Activated CD4-positive, alpha-beta T cell treated with anti-CD3 and anti-CD28 coated beads for 36 hours (primary cell): ENCODE measurements at regions of chr6 and their contacts with region 1.

Region 1: DNA sequence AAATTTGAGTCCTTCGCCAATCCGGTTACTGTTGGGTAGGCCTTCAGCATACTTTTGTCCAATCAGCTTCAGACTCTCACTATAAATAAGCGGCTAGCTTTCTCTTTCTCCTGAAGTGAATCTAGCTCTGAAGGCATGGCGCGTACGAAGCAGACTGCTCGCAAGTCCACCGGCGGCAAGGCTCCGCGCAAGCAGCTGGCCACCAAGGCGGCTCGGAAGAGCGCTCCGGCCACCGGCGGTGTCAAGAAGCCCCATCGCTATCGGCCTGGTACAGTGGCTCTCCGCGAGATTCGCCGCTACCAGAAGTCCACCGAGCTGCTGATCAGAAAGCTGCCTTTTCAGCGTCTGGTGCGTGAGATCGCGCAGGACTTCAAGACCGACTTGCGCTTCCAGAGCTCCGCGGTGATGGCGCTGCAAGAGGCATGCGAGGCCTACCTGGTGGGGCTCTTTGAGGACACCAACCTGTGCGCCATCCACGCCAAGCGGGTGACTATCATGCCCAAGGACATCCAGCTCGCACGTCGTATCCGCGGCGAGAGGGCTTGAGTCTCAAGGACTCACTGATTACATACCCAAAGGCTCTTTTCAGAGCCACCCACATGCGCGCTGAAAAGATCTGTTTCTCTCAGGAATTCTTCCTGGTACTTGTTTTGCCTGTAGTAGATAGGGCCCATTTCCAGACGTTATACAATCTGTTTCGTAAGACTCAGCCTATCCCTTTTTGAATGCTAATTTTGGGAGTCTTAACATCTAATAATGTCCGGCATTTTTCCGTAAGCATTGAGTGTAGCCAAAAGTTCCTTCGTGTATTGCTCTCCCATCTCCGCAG is 102.0 kb downstream of the OR2B2 start:
- DNase-seq: peak; percentile 83
- ATAC-seq: peak; percentile 33
- H3K4me3 Mint-ChIP-seq: peak overlapping the region; percentile 86
- H3K27ac Mint-ChIP-seq: peak overlapping the region; percentile 95
- H3K4me1 Mint-ChIP-seq: peaks cover 49% of the 10 kb centered on the region
- H3K27me3 Mint-ChIP-seq: no peaks in the 10 kb centered on the region

Region 2: DNA sequence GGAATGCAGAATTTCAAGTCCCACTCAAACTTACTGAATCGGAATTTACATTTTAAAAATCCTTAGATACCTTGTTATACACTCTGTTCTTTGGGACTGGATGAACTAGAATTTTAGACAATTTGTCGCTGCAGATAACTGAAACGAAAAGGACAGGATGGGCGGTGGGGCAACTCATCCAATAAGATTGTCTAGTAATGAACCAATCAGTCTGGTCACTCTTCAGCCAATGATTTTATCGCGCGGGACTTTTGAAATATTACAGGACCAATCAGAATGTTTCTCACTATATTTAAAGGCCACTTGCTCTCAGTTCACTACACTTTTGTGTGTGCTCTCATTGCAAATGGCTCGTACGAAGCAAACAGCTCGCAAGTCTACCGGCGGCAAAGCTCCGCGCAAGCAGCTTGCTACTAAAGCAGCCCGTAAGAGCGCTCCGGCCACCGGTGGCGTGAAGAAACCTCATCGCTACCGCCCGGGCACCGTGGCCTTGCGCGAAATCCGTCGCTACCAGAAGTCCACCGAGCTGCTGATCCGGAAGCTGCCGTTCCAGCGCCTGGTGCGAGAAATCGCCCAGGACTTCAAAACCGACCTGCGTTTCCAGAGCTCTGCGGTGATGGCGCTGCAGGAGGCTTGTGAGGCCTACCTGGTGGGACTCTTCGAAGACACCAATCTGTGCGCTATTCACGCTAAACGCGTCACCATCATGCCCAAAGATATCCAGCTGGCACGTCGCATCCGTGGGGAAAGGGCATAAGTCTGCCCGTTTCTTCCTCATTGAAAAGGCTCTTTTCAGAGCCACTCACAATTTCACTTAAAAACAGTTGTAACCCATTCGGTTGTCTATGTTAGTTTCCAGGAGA is 1764.9 kb before region 1 on chr6:
- CTCF ChIA-PET with region 1: no interaction called
- POLR2A ChIA-PET with region 1: interaction called, 4 read pairs
- intact Hi-C with region 1: loop called in 1 of 2 experiments (anchors 5 kb)
- DNase-seq: peak; percentile 83
- ATAC-seq: peak; percentile 63
- H3K4me3 Mint-ChIP-seq: peak overlapping the region; percentile 79
- H3K27ac Mint-ChIP-seq: peak overlapping the region; percentile 99
- H3K4me1 Mint-ChIP-seq: peaks cover 18% of the 10 kb centered on the region
- H3K27me3 Mint-ChIP-seq: no peaks in the 10 kb centered on the region

Region 3: DNA sequence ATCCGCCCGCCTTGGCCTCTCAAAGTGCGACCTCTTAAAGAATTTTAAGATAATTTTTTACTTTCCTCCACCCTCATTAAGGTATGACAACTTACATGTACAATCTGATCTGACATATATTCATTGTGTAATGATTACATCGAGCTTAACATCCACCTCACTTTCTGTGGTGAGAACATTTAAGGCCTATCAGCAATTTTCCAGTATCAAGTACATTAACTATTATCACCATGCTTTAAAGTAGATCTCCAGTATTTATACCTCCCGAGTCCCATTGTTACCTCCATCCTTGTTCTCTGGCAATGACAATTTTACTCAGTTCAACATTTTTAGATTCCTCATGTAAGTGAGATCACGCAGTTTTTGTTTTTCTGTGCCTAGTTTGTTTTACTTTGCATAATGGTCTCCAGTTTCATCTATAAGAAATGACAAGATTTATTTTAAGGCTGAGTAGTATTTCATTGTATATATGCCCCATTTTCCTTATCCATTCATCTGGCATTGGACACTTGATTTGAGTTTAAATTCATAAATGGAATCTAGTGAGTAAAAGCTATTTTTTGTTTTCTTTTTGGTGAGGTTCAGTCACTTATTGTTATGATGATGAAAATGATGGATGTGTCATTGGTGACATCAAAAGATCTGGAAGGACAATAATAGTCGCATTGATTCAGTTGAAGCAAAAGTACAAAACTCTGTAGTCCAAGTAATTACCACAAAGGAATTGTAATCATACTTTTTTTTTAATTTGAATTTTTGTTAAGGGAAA is 15.1 kb after region 1 on chr6:
- CTCF ChIA-PET with region 1: interaction called, 9 read pairs
- POLR2A ChIA-PET with region 1: interaction called, 33 read pairs
- intact Hi-C with region 1: loop called in 1 of 2 experiments (anchors 1 kb)
- DNase-seq: no peak
- ATAC-seq: peak; percentile 3
- H3K4me3 Mint-ChIP-seq: peak overlapping the region; percentile 79
- H3K27ac Mint-ChIP-seq: peak overlapping the region; percentile 92
- H3K4me1 Mint-ChIP-seq: peaks cover 20% of the 10 kb centered on the region
- H3K27me3 Mint-ChIP-seq: no peaks in the 10 kb centered on the region

Region 4: DNA sequence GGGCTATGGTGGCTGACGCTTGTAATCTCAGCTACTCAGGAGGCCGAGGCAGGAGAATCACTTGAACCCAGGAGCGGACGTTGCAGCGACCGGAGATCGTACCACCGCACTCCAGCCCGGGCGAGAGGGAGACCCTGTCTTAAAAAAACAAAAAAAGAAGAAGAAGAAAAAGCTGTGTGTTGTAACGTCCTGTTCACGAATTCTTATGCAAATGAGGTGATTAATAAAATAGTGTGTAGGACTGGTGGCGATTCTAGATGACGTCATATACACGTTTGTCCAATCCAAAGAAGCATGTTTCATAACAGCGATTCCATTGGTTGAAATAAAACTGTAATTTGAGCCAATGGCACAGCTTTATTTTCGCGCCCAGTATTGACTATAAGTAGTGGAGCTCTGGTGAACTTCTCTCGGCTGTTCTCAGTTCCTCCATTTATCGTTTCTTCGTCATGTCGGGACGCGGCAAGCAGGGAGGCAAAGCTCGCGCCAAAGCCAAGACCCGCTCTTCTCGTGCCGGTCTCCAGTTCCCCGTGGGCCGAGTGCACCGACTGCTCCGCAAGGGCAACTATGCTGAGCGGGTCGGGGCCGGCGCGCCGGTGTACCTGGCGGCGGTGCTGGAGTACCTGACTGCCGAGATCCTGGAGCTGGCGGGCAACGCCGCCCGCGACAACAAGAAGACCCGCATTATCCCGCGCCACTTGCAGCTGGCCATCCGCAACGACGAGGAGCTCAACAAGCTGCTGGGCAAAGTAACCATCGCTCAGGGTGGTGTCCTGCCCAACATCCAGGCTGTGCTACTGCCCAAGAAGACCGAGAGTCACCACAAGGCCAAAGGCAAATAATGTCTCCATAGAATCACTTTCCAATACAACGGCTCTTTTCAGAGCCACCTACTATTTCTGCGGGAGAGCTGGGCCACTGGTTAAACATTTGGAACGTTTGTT is 55.0 kb after region 1 on chr6:
- CTCF ChIA-PET with region 1: interaction called, 11 read pairs
- POLR2A ChIA-PET with region 1: interaction called, 133 read pairs
- intact Hi-C with region 1: loop called in 1 of 2 experiments (anchors 1 kb)
- DNase-seq: peak; percentile 86
- ATAC-seq: peak; percentile 57
- H3K4me3 Mint-ChIP-seq: peak overlapping the region; percentile 94
- H3K27ac Mint-ChIP-seq: peak overlapping the region; percentile 99
- H3K4me1 Mint-ChIP-seq: peaks cover 40% of the 10 kb centered on the region
- H3K27me3 Mint-ChIP-seq: no peaks in the 10 kb centered on the region

Region 5: GRCh38 chr6:28349892-28350737 is 540.0 kb after region 1 on chr6 and contains the start of gene ZKSCAN3:
- CTCF ChIA-PET with region 1: no interaction called
- POLR2A ChIA-PET with region 1: no interaction called
- intact Hi-C with region 1: loop called in 1 of 2 experiments (anchors 5 kb)
- DNase-seq: peak; percentile 94
- ATAC-seq: peak; percentile 100
- H3K4me3 Mint-ChIP-seq: peak within 1 kb of the TSS; percentile 96
- H3K27ac Mint-ChIP-seq: peak within 1 kb of the TSS; percentile 93
- H3K4me1 Mint-ChIP-seq: peaks cover 22% of the 10 kb centered on the region
- H3K27me3 Mint-ChIP-seq: peaks cover 7% of the 10 kb centered on the region
- total RNA-seq, gene ZKSCAN3: 2.2 to 3.1 TPM